Mammary epithelial cell (primary cell): ENCODE measurements at regions of chr20 and their contacts with region 1.

Region 1: DNA sequence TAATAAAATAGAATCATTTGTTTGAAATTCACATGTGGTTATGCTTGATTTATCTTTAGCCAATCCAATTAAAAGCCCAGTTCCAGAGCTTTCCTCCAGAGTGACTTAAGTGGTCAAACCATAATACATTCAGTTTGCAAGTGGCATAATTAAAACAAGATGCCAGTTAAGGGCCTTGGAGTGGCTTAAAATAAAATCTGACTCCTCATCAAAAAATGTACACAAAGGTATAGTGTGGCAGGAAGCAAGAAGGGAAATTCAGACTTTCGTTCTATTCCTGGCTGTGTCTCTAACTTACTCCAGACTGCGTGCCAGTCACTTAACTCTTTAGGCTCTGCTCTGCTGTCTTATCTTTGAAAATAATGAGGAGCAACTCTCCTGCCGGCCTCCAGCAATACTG is 251.3 kb upstream of the PRND start:
- DNase-seq: no peak
- H3K4me3 ChIP-seq: no peak overlapping the region
- H3K27ac ChIP-seq: no peak overlapping the region
- H3K4me1 ChIP-seq: peaks cover 12% of the 10 kb centered on the region
- H3K27me3 ChIP-seq: no peaks in the 10 kb centered on the region
- CTCF ChIP-seq: no peak

Region 2: GRCh38 chr20:4369798-4370124 is 100.6 kb before region 1 on chr20:
- CTCF ChIA-PET with region 1: no interaction called
- dilution Hi-C with region 1: loop called (anchors 5 kb)
- in situ Hi-C with region 1: no loop called
- intact Hi-C with region 1: no loop called
- DNase-seq: no peak
- H3K4me3 ChIP-seq: no peak overlapping the region
- H3K27ac ChIP-seq: no peak overlapping the region
- H3K4me1 ChIP-seq: peaks cover 5% of the 10 kb centered on the region
- H3K27me3 ChIP-seq: no peaks in the 10 kb centered on the region
- CTCF ChIP-seq: no peak

Region 3: GRCh38 chr20:4401601-4402000 is 68.8 kb before region 1 on chr20:
- CTCF ChIA-PET with region 1: no interaction called
- dilution Hi-C with region 1: loop called (anchors 5 kb)
- in situ Hi-C with region 1: no loop called
- intact Hi-C with region 1: no loop called
- DNase-seq: no peak
- H3K4me3 ChIP-seq: no peak overlapping the region
- H3K27ac ChIP-seq: no peak overlapping the region
- H3K4me1 ChIP-seq: peaks cover 8% of the 10 kb centered on the region
- H3K27me3 ChIP-seq: no peaks in the 10 kb centered on the region
- CTCF ChIP-seq: no peak

Region 4: GRCh38 chr20:4507288-4507719 is 36.9 kb after region 1 on chr20:
- CTCF ChIA-PET with region 1: no interaction called
- dilution Hi-C with region 1: loop called (anchors 5 kb)
- in situ Hi-C with region 1: no loop called
- intact Hi-C with region 1: no loop called
- DNase-seq: peak; percentile 80
- H3K4me3 ChIP-seq: no peak overlapping the region
- H3K27ac ChIP-seq: peak overlapping the region; percentile 45
- H3K4me1 ChIP-seq: peaks cover 22% of the 10 kb centered on the region
- H3K27me3 ChIP-seq: no peaks in the 10 kb centered on the region
- CTCF ChIP-seq: no peak